ENCODE measurements at regions of chrX and their contacts with region 1.

Region 1: GRCh38 chrX:54044126-54044876 is at the start of gene PHF8:
- DNase-seq: peak; percentile 96
- H3K4me3 Mint-ChIP-seq: peak within 1 kb of the TSS; percentile 91
- H3K27ac Mint-ChIP-seq: peak within 1 kb of the TSS; percentile 96
- H3K4me1 Mint-ChIP-seq: peaks cover 21% of the 10 kb centered on the region
- H3K27me3 Mint-ChIP-seq: no peaks in the 10 kb centered on the region
- total RNA-seq, gene PHF8: 51.2 to 52.0 TPM

Region 2: DNA sequence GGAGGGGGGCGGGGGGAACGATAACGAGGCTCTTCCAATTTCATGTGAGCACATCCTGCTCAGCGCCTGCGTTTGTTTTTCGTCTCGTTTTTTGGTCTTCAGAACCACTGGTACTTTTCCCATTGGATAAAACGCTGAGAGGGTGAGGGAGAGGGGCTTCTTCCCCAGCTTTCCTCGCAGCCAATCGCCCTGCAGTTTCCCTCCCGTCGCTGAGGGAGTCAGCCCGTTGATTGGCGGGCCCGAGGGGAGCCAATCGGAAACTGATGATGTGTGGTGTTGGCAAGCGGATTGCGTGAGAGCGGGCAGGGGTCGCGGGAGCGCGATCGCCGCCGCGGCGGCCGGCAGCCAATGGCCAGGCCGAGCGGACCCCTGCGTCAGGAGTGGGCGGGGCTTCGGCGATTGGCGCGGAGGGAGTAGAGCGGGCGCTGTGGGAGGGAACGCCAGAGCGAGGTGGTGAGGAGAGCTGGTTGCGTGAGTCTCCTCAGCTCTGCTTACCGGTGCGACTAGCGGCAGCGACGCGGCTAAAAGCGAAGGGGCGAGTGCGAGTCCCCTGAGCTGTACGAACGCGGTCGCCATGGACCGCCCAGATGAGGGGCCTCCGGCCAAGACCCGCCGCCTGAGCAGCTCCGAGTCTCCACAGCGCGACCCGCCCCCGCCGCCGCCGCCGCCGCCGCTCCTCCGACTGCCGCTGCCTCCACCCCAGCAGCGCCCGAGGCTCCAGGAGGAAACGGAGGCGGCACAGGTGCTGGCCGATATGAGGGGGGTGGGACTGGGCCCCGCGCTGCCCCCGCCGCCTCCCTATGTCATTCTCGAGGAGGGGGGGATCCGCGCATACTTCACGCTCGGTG is 962.2 kb before region 1 on chrX and contains the start of gene TSPYL2:
- CTCF ChIA-PET with region 1: no interaction called
- POLR2A ChIA-PET with region 1: no interaction called
- intact Hi-C with region 1: loop called (anchors 10 kb)
- DNase-seq: peak; percentile 95
- H3K4me3 Mint-ChIP-seq: peak within 1 kb of the TSS; percentile 90
- H3K27ac Mint-ChIP-seq: peak within 1 kb of the TSS; percentile 95
- H3K4me1 Mint-ChIP-seq: peaks cover 47% of the 10 kb centered on the region
- H3K27me3 Mint-ChIP-seq: no peaks in the 10 kb centered on the region
- total RNA-seq, gene TSPYL2: 70.6 to 72.8 TPM

Region 3: DNA sequence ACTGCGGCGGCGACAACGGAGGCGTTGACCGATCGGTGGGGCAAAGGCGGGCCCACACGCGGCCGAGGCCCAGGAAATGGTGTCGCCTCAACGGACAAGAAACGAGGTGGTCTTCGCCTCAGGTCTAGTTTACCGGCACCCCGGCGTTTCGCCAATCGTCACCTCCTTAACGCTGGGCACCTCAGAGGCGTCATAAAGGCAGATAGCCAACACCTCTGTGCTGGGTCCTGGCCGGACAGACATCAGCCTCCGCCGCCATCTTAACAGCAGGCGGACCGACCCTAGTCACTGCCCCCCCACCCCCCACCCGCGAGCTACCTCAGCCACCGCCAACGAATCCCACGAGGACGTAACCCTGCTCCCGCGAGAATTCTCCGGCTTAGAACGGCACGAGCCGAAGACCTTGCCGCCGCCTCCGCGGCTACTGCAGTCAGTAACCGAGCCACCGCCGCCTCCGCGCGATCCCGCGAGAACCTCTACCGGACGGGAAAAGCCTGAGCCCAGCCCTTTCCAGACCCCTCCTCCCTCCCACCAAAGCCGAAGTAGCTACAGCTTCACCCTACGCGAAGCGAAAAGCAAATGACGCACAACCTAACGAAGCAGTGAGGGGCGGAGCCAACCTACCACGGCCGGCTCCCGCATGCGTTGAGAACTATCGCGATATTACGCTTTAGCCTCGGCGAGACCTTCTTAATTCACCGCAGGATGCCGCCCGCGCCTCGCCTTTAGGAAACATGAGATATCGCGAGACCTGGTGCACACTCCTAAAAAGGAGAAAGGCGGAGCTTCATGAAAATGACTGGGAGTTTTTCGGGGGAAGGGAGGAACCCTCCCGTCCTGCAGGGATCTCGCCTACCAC is 360.5 kb before region 1 on chrX:
- CTCF ChIA-PET with region 1: no interaction called
- POLR2A ChIA-PET with region 1: interaction called, 9 read pairs
- intact Hi-C with region 1: loop called (anchors 1 kb)
- DNase-seq: peak; percentile 95
- H3K4me3 Mint-ChIP-seq: peak overlapping the region; percentile 92
- H3K27ac Mint-ChIP-seq: peak overlapping the region; percentile 96
- H3K4me1 Mint-ChIP-seq: peaks cover 27% of the 10 kb centered on the region
- H3K27me3 Mint-ChIP-seq: no peaks in the 10 kb centered on the region

Region 4: GRCh38 chrX:54439967-54440871 is 395.9 kb after region 1 on chrX and contains the start of gene TSR2:
- CTCF ChIA-PET with region 1: interaction called, 6 read pairs
- POLR2A ChIA-PET with region 1: no interaction called
- intact Hi-C with region 1: loop called (anchors 10 kb)
- DNase-seq: peak; percentile 88
- H3K4me3 Mint-ChIP-seq: peak within 1 kb of the TSS; percentile 90
- H3K27ac Mint-ChIP-seq: peak within 1 kb of the TSS; percentile 78
- H3K4me1 Mint-ChIP-seq: peaks cover 26% of the 10 kb centered on the region
- H3K27me3 Mint-ChIP-seq: no peaks in the 10 kb centered on the region
- total RNA-seq, gene TSR2: 24.1 to 25.4 TPM

Region 5: GRCh38 chrX:54639346-54640102 is 595.2 kb after region 1 on chrX:
- CTCF ChIA-PET with region 1: no interaction called
- POLR2A ChIA-PET with region 1: no interaction called
- intact Hi-C with region 1: loop called (anchors 1 kb)
- DNase-seq: peak; percentile 95
- H3K4me3 Mint-ChIP-seq: peak overlapping the region; percentile 90
- H3K27ac Mint-ChIP-seq: peak overlapping the region; percentile 99
- H3K4me1 Mint-ChIP-seq: peaks cover 5% of the 10 kb centered on the region
- H3K27me3 Mint-ChIP-seq: no peaks in the 10 kb centered on the region

Measured in activated CD4-positive, alpha-beta memory T cell treated with anti-CD3 and anti-CD28 coated beads for 36 hours (primary cell).